PC-9 (cell line): ENCODE measurements at regions of chr11 and their contacts with region 1.

Region 1: GRCh38 chr11:66106786-66107599 is 36.9 kb downstream of the PACS1 start:
- DNase-seq: no peak
- H3K4me3 ChIP-seq: no peak overlapping the region
- H3K27ac ChIP-seq: no peak overlapping the region
- H3K4me1 ChIP-seq: peaks cover 27% of the 10 kb centered on the region
- H3K27me3 ChIP-seq: no peaks in the 10 kb centered on the region
- CTCF ChIP-seq: no peak

Region 2: GRCh38 chr11:65366340-65366773 is 740.6 kb before region 1 on chr11:
- CTCF ChIA-PET with region 1: no interaction called
- POLR2A ChIA-PET with region 1: no interaction called
- intact Hi-C with region 1: no loop called
- DNase-seq: peak; percentile 55 to 71
- H3K4me3 ChIP-seq: no peak overlapping the region
- H3K27ac ChIP-seq: no peak overlapping the region
- H3K4me1 ChIP-seq: peaks cover 9% of the 10 kb centered on the region
- H3K27me3 ChIP-seq: no peaks in the 10 kb centered on the region
- CTCF ChIP-seq: peak; percentile 92

Region 3: DNA sequence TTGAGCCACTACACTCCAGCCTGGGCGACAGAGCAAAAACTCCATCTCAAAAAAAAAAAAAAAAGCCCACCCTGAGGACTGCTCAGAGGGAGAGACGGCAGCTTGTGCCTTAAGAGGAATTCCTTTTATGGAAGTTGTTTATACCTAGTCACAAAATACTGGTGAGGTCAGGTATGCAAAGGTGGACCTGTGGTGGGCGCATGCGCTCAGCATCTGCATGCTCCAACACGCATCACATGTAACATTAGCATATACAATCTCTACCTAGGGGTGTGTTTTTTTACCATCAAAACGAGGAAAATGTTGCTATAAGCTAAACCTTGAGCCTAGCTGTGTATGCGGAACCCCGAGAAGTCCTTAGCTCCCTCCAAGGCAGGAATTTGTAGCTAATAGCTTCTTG is 152.2 kb before region 1 on chr11:
- CTCF ChIA-PET with region 1: interaction called, 11 read pairs
- POLR2A ChIA-PET with region 1: no interaction called
- intact Hi-C with region 1: no loop called
- DNase-seq: no peak
- H3K4me3 ChIP-seq: no peak overlapping the region
- H3K27ac ChIP-seq: no peak overlapping the region
- H3K4me1 ChIP-seq: no peaks in the 10 kb centered on the region
- H3K27me3 ChIP-seq: no peaks in the 10 kb centered on the region
- CTCF ChIP-seq: no peak

Region 4: DNA sequence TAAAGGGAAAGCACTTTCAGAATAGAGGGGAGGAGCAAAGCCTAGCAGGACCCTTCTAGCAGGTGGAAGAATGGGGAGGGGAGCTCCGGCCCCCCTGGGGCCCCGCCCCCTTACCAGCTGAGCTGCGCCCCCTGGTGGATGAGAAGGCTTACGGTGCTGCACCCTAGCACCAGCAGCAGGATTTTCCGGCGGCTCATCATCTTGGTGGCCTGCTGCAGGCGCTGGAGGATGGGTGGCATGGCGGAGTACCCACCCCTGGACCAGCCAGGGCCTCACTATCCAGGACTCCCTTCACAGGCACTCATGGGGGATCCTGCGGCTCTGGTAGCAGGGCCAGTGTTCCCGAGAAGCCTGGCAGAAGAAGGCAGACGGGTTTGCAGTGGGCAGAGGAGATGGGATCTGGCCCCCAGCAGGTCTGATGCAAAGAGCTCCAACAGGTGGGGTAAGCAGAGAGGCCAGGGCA is 61.8 kb before region 1 on chr11:
- CTCF ChIA-PET with region 1: no interaction called
- POLR2A ChIA-PET with region 1: no interaction called
- intact Hi-C with region 1: no loop called
- DNase-seq: peak; percentile 70 to 81
- H3K4me3 ChIP-seq: peak overlapping the region; percentile 1; the same call in 1 of the 2 replicates
- H3K27ac ChIP-seq: no peak overlapping the region
- H3K4me1 ChIP-seq: no peaks in the 10 kb centered on the region
- H3K27me3 ChIP-seq: no peaks in the 10 kb centered on the region
- CTCF ChIP-seq: peak; percentile 99